Cardiac septum (tissue), 1 donor: ENCODE measurements at regions of chr7 and their contacts with region 1.

Region 1: DNA sequence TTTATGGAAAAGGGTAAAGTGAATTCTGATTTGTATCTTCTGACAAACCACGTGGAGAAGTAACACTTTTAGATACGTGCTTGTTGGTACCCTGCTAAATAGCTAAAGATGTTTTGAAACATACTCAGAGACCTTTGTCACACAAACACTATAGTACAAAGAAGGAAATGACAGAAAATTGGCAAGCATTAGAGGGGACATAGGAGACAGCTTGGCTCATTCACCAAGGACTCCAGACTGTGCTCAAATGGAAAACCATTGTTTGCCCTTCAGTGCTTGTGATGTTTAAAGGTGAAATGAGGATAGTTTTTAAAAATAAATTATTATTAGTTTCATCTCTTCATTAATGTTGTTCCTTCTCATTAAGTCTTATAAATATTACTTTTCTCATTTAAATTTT is 34.0 kb upstream of the CD36 start:
- DNase-seq: no peak

Region 2: DNA sequence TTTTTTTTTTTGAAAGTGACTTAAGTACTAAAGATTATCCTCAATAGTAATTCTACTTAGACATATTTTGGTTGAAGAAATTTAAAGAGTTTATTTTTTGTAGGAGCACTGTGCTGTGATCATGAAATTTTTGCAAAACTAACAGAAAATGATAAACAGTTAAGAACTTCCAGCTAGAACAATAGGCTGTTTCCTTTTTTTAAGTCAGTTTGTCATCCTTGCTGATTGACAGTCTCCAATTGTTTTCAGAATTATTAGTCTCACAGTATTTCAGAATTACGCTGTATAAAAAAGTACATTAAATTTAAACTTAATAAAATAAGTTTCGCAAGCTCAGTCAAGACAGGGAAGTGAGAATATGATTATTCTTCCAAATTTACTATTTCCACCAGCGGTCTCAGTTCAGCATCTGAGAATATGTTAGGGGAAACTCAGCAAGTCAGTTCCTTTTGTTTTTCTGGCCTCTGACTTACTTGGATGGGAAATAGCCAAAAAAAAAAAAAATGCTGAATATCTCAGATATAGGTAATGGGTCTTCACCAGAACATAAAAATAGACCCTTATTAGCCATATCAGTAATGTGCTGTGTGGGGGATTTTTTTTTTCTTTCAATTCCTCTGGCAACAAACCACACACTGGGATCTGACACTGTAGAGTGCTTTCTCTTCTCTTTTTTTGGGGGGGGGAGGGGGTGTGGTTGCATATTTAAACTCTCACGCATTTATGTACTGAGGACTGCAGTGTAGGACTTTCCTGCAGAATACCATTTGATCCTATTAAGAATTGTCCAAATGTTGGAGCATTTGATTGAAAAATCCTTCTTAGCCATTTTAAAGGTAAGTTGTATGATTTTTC is 33.7 kb after region 1 on chr7 and contains the start of gene CD36:
- intact Hi-C with region 1: loop called (anchors 5 kb)
- DNase-seq: no peak
- total RNA-seq, gene CD36: 717 TPM